ENCODE measurements at regions of chr7 and their contacts with region 1.

Region 1: GRCh38 chr7:23981320-23981719 is 271.3 kb downstream of the STK31 start:
- DNase-seq: no peak
- ATAC-seq: no peak
- H3K4me3 ChIP-seq: no peak overlapping the region
- H3K4me3 Mint-ChIP-seq: no peak overlapping the region
- H3K27ac ChIP-seq: no peak overlapping the region
- H3K27ac Mint-ChIP-seq: no peak overlapping the region
- H3K4me1 ChIP-seq: no peaks in the 10 kb centered on the region
- H3K4me1 Mint-ChIP-seq: no peaks in the 10 kb centered on the region
- H3K27me3 ChIP-seq: peaks cover 3% of the 10 kb centered on the region
- H3K27me3 Mint-ChIP-seq: peaks cover 0 to 10% of the 10 kb centered on the region in 2 donors
- CTCF ChIP-seq: no peak

Region 2: DNA sequence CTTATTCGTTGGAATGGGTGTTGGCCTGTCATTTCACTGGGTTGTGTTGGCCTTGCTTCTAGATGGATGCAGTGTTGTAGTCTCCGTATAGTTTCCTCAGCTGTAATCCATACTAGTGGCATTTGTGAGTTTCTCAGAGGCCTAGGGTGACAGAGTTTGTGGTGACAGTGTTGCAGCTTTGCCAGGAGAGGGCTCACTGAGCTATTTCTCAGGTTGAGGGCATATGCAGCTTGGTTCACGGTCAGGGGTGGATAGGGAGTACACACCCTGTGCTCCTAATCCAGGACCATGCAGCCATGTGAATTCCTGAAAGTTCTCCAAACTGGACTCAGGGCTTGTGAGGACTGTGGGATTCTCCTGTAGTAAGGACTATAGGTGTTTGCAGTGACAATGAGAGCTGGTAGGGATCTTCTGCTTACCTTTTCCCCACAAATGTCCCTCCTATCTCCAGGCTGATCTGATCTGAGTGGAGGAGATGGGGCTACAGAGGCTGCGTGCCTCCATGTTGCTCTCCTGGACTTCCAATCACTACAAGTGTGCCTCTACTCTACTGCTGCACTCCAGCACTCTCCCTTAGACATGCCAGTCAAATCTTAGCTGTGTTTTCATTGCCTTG is 42.3 kb before region 1 on chr7:
- intact Hi-C with region 1: loop called (anchors 10 kb)
- DNase-seq: peak in 1 of 2 donors; percentile 13
- ATAC-seq: no peak
- H3K4me3 ChIP-seq: no peak overlapping the region
- H3K4me3 Mint-ChIP-seq: no peak overlapping the region
- H3K27ac ChIP-seq: no peak overlapping the region
- H3K27ac Mint-ChIP-seq: no peak overlapping the region
- H3K4me1 ChIP-seq: no peaks in the 10 kb centered on the region
- H3K4me1 Mint-ChIP-seq: no peaks in the 10 kb centered on the region
- H3K27me3 ChIP-seq: peaks cover 7% of the 10 kb centered on the region
- H3K27me3 Mint-ChIP-seq: peaks cover 24 to 28% of the 10 kb centered on the region in 2 donors
- CTCF ChIP-seq: no peak

Region 3: GRCh38 chr7:24152356-24152755 is 171.0 kb after region 1 on chr7:
- intact Hi-C with region 1: no loop called
- DNase-seq: no peak
- ATAC-seq: no peak
- H3K4me3 ChIP-seq: no peak overlapping the region
- H3K4me3 Mint-ChIP-seq: no peak overlapping the region
- H3K27ac ChIP-seq: no peak overlapping the region
- H3K27ac Mint-ChIP-seq: no peak overlapping the region
- H3K4me1 ChIP-seq: no peaks in the 10 kb centered on the region
- H3K4me1 Mint-ChIP-seq: no peaks in the 10 kb centered on the region
- H3K27me3 ChIP-seq: no peaks in the 10 kb centered on the region
- H3K27me3 Mint-ChIP-seq: peaks cover 3 to 14% of the 10 kb centered on the region in 2 donors
- CTCF ChIP-seq: no peak

Region 4: GRCh38 chr7:24178811-24179570 is 197.7 kb after region 1 on chr7:
- intact Hi-C with region 1: no loop called
- DNase-seq: no peak
- ATAC-seq: no peak
- H3K4me3 ChIP-seq: no peak overlapping the region
- H3K4me3 Mint-ChIP-seq: no peak overlapping the region
- H3K27ac ChIP-seq: no peak overlapping the region
- H3K27ac Mint-ChIP-seq: no peak overlapping the region
- H3K4me1 ChIP-seq: no peaks in the 10 kb centered on the region
- H3K4me1 Mint-ChIP-seq: no peaks in the 10 kb centered on the region
- H3K27me3 ChIP-seq: no peaks in the 10 kb centered on the region
- H3K27me3 Mint-ChIP-seq: peaks cover 11 to 20% of the 10 kb centered on the region in 2 donors
- CTCF ChIP-seq: no peak

Region 5: DNA sequence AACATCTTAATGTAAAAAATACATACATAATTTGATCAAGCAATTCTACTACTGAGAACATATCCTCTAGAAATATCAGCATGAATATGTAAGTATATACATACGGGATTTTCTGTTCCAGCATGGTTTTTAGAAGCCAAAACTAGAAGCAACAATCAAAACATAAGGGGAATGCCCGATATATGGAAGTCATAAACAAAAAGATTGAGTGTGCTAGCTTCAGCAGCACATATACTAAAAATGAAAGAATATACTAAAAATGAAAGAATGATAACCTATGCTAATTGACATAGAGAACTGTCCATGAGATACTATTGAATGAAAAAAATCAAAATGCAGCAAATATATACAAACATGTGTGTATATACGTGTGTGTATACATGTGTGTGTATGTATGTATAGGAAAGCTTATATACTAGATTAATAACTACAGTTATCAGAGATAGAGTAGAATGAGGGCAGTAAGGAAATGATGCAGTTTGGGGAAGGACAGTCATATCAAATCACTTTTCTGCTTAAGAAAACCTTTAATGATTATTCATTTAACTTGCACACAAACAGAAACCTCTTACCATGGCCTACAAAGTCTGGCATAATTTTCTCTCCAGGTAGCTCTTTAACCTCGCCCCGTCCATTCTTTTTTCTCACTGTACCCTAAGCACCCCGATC is 375.5 kb after region 1 on chr7:
- intact Hi-C with region 1: no loop called
- DNase-seq: no peak
- ATAC-seq: no peak
- H3K4me3 ChIP-seq: no peak overlapping the region
- H3K4me3 Mint-ChIP-seq: no peak overlapping the region
- H3K27ac ChIP-seq: no peak overlapping the region
- H3K27ac Mint-ChIP-seq: no peak overlapping the region
- H3K4me1 ChIP-seq: no peaks in the 10 kb centered on the region
- H3K4me1 Mint-ChIP-seq: no peaks in the 10 kb centered on the region
- H3K27me3 ChIP-seq: no peaks in the 10 kb centered on the region
- H3K27me3 Mint-ChIP-seq: peaks cover 22% of the 10 kb centered on the region in 2 donors
- CTCF ChIP-seq: no peak

Region 6: DNA sequence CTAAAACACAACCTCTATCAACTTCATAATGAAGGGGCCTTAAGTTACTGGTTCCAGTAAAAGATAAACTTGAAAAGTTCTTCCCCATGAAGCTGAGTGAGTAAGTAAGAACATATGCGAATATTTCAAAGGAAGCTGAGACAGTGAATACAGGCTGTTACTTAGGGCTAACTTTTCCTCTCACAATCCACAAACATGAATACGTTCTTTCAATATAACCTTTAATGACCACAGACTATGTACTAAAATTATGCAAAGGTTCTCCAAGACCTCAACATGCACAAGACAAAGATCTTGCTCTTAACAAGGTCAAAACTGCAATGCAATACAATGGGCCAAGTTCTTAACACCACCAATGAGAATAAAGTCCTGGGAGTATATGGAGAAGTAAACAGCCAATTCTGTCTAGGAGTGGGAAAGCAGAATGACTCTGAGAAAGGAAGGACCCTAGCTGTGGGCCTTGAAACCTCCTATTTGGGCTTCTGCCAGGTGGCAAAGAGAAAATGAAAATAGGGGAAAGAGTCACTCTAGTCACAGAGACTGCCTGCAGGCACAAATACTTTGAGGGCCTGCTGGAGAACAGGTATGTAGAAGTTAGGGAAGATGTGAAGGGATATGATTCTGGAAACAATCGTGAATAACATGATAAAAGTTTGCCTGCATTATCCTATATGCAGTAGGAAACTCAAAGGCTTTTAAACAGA is 955.0 kb after region 1 on chr7:
- intact Hi-C with region 1: no loop called
- DNase-seq: no peak
- ATAC-seq: peak in 2 of 3 donors; percentile 21 to 35
- H3K4me3 ChIP-seq: no peak overlapping the region
- H3K4me3 Mint-ChIP-seq: no peak overlapping the region
- H3K27ac ChIP-seq: no peak overlapping the region
- H3K27ac Mint-ChIP-seq: peak overlapping the region; percentile 17 to 60
- H3K4me1 ChIP-seq: peaks cover 3% of the 10 kb centered on the region
- H3K4me1 Mint-ChIP-seq: peaks cover 48 to 73% of the 10 kb centered on the region in 2 donors
- H3K27me3 ChIP-seq: no peaks in the 10 kb centered on the region
- H3K27me3 Mint-ChIP-seq: no peaks in the 10 kb centered on the region
- CTCF ChIP-seq: no peak